Natural killer cell (primary cell): ENCODE measurements at regions of chr1 and their contacts with region 1.

Region 1: DNA sequence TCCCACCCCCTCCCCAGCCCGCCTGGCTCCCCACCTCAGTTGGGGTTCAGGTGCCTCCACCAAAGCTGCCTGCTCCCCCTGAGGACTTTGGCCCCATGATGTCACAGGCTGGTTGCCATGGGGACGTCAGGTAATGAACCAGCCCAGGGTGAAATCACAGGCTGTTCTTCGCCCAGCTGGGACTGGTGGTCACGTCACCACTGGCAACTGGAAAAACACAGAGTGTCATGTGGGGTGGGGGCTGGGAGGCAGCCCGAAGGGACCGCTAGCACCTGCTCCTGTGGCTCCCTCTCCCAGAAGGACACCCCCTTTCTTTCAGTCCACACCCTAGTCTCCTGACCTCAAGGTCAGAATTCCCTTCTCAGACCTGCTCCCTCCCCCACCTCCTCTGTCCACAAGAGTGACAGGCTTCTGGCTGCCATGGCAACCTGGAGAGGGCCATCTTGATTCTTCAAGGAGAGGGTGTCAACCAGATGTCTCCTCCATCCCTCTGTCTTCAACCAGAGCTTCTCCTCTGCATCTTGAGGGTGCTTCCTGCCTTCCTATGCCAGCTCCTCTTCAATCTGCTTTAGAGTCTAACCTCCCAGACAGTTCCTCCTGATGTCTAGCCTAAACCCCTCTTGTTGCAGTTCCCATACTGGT is 6.2 kb downstream of the FAM131C start:
- DNase-seq: no peak
- ATAC-seq: no peak
- H3K4me3 ChIP-seq: no peak overlapping the region
- H3K4me3 Mint-ChIP-seq: no peak overlapping the region
- H3K27ac ChIP-seq: no peak overlapping the region
- H3K27ac Mint-ChIP-seq: no peak overlapping the region
- H3K4me1 ChIP-seq: peaks cover 34% of the 10 kb centered on the region
- H3K4me1 Mint-ChIP-seq: peaks cover 21 to 32% of the 10 kb centered on the region in 2 donors
- H3K27me3 ChIP-seq: no peaks in the 10 kb centered on the region
- H3K27me3 Mint-ChIP-seq: peaks cover 6 to 22% of the 10 kb centered on the region in 2 donors
- CTCF ChIP-seq: no peak

Region 2: GRCh38 chr1:15876357-15877055 is 190.7 kb before region 1 on chr1:
- intact Hi-C with region 1: no loop called
- DNase-seq: peak in 1 of 2 donors; percentile 16
- ATAC-seq: no peak
- H3K4me3 ChIP-seq: no peak overlapping the region
- H3K4me3 Mint-ChIP-seq: no peak overlapping the region
- H3K27ac ChIP-seq: no peak overlapping the region
- H3K27ac Mint-ChIP-seq: peak overlapping the region in 1 of 2 donors; percentile 34
- H3K4me1 ChIP-seq: no peaks in the 10 kb centered on the region
- H3K4me1 Mint-ChIP-seq: peaks cover 32 to 38% of the 10 kb centered on the region in 2 donors
- H3K27me3 ChIP-seq: no peaks in the 10 kb centered on the region
- H3K27me3 Mint-ChIP-seq: no peaks in the 10 kb centered on the region
- CTCF ChIP-seq: no peak

Region 3: GRCh38 chr1:16009030-16009709 is 58.1 kb before region 1 on chr1:
- intact Hi-C with region 1: no loop called
- DNase-seq: peak; percentile 71 to 83
- ATAC-seq: peak; percentile 32 to 74 (median 66)
- H3K4me3 ChIP-seq: no peak overlapping the region
- H3K4me3 Mint-ChIP-seq: no peak overlapping the region
- H3K27ac ChIP-seq: no peak overlapping the region
- H3K27ac Mint-ChIP-seq: no peak overlapping the region
- H3K4me1 ChIP-seq: peaks cover 23% of the 10 kb centered on the region
- H3K4me1 Mint-ChIP-seq: peaks cover 0 to 15% of the 10 kb centered on the region in 2 donors
- H3K27me3 ChIP-seq: no peaks in the 10 kb centered on the region
- H3K27me3 Mint-ChIP-seq: no peaks in the 10 kb centered on the region
- CTCF ChIP-seq: peak; percentile 98

Region 4: DNA sequence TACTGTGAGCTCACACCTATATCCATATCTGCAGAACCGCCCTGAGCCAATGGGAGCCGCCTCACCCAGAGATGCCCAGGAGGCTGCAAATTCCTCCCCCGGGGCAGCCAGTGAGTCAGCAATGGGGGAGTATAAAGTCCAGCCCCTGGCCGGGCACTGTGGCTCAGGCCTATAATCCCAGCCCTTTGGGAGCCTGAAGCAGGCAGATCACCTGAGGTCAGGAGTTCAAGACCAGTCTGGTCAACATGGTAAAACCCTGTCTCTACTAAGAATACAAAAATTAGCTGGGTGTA is 28.7 kb before region 1 on chr1:
- intact Hi-C with region 1: loop called (anchors 1 kb)
- DNase-seq: no peak
- ATAC-seq: no peak
- H3K4me3 ChIP-seq: no peak overlapping the region
- H3K4me3 Mint-ChIP-seq: no peak overlapping the region
- H3K27ac ChIP-seq: no peak overlapping the region
- H3K27ac Mint-ChIP-seq: no peak overlapping the region
- H3K4me1 ChIP-seq: no peaks in the 10 kb centered on the region
- H3K4me1 Mint-ChIP-seq: no peaks in the 10 kb centered on the region
- H3K27me3 ChIP-seq: no peaks in the 10 kb centered on the region
- H3K27me3 Mint-ChIP-seq: peaks cover 7% of the 10 kb centered on the region in 2 donors
- CTCF ChIP-seq: no peak

Region 5: GRCh38 chr1:16199157-16199501 is 131.9 kb after region 1 on chr1:
- intact Hi-C with region 1: no loop called
- DNase-seq: no peak
- ATAC-seq: no peak
- H3K4me3 ChIP-seq: no peak overlapping the region
- H3K4me3 Mint-ChIP-seq: no peak overlapping the region
- H3K27ac ChIP-seq: no peak overlapping the region
- H3K27ac Mint-ChIP-seq: peak overlapping the region in 1 of 2 donors; percentile 53
- H3K4me1 ChIP-seq: no peaks in the 10 kb centered on the region
- H3K4me1 Mint-ChIP-seq: peaks cover 0 to 24% of the 10 kb centered on the region in 2 donors
- H3K27me3 ChIP-seq: no peaks in the 10 kb centered on the region
- H3K27me3 Mint-ChIP-seq: no peaks in the 10 kb centered on the region
- CTCF ChIP-seq: no peak

Region 6: GRCh38 chr1:16243936-16244649 is 176.8 kb after region 1 on chr1:
- intact Hi-C with region 1: no loop called
- DNase-seq: peak; percentile 67 to 87
- ATAC-seq: peak; percentile 86 to 97 (median 92)
- H3K4me3 ChIP-seq: no peak overlapping the region
- H3K4me3 Mint-ChIP-seq: no peak overlapping the region
- H3K27ac ChIP-seq: no peak overlapping the region
- H3K27ac Mint-ChIP-seq: no peak overlapping the region
- H3K4me1 ChIP-seq: peaks cover 9% of the 10 kb centered on the region
- H3K4me1 Mint-ChIP-seq: peaks cover 3 to 13% of the 10 kb centered on the region in 2 donors
- H3K27me3 ChIP-seq: no peaks in the 10 kb centered on the region
- H3K27me3 Mint-ChIP-seq: no peaks in the 10 kb centered on the region
- CTCF ChIP-seq: peak; percentile 71